Activated naive CD4-positive, alpha-beta T cell treated with anti-CD3 and anti-CD28 coated beads for 36 hours (primary cell): ENCODE measurements at regions of chr1 and their contacts with region 1.

Region 1: DNA sequence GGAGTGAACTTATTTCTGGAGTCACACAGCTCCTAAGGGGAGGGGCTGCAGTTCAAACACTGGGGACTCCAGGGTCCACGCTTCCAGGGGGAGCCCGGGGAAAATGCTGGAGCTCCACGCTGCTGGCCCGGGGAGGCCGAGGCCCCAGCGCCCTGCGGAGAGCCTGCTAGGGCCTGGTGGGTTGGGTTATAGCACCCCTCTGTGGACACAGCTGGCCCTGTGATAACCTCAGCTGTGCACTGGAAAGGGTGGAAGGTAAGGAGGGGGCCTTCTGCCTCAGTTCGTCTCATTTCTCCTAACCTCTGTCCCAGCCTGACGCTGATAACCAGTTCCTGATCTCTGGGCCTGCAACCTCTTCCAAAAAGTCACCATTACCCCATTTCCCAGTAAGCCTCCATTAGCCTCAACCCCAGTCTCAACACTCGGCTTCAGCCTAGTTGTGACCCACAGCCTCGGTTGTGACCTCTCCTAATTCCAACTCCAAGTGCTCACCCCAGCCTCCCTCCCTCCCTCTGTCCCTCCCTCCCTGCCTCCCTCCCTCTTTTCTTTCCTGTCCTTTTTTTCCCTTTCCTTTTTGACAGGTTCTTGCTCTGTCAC is 7.1 kb downstream of the NBL1 start:
- DNase-seq: peak; percentile 74
- H3K4me3 Mint-ChIP-seq: no peak overlapping the region
- H3K27ac Mint-ChIP-seq: no peak overlapping the region
- H3K4me1 Mint-ChIP-seq: peaks cover 33% of the 10 kb centered on the region
- H3K27me3 Mint-ChIP-seq: no peaks in the 10 kb centered on the region

Region 2: DNA sequence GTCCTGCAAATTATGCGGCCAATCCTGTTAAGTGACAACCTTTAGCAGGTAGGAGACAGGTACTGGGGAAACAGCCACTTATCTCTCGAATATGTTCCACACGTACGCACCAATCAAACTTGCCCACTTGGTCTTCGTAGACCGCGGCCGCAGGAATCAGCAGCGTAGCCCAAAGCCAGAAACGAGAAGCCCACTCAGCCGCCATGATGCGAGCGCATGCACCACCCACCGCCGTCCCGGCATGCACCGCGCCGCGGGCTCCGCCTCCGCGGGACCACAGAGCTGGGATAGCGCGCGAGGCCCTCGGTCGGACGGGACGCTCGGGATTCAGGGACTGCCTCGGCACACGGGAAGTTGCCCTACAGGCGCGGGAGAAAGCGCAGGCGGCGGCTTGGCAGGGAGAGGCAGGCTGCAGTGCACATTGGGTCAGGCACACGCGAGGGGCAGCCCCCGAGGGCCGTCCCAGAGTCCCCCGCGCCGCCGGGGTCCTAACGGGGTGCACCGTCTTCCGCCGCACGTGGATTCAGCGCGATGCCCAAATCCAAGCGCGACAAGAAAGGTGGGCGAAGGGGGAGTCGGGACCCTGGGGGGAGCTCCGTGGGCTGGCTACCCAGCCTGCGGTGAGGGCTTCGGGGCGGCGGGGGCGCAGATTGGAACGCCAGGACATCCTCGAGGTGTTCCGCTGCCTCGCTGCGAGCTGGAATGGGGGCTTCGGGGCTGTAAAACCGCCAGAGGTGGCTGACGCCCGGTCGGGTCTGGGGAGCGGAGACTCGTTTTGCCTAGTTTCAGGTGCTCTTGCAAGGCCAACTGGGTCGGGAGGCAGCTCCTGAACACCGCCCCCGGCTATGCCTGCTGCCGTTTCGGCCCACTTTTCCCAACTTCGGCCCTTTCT is 399.7 kb before region 1 on chr1 and contains the starts of genes EMC1 and MRTO4:
- CTCF ChIA-PET with region 1: no interaction called
- intact Hi-C with region 1: loop called (anchors 2 kb)
- DNase-seq: peak; percentile 90
- H3K4me3 Mint-ChIP-seq: peak within 1 kb of the TSS; percentile 85
- H3K27ac Mint-ChIP-seq: peak within 1 kb of the TSS; percentile 90
- H3K4me1 Mint-ChIP-seq: peaks cover 47% of the 10 kb centered on the region
- H3K27me3 Mint-ChIP-seq: no peaks in the 10 kb centered on the region
- total RNA-seq, gene EMC1: 40.2 to 43.2 TPM
- total RNA-seq, gene MRTO4: 53.2 to 54.3 TPM

Region 3: GRCh38 chr1:19390901-19391595 is 260.2 kb before region 1 on chr1:
- CTCF ChIA-PET with region 1: interaction called, 5 read pairs
- intact Hi-C with region 1: loop called (anchors 1 kb)
- DNase-seq: peak; percentile 69
- H3K4me3 Mint-ChIP-seq: peak overlapping the region; percentile 62
- H3K27ac Mint-ChIP-seq: peak overlapping the region; percentile 81
- H3K4me1 Mint-ChIP-seq: peaks cover 68% of the 10 kb centered on the region
- H3K27me3 Mint-ChIP-seq: no peaks in the 10 kb centered on the region

Region 4: GRCh38 chr1:19485362-19486187 is 165.7 kb before region 1 on chr1 and contains the start of gene CAPZB:
- CTCF ChIA-PET with region 1: interaction called, 9 read pairs
- intact Hi-C with region 1: loop called (anchors 2 kb)
- DNase-seq: peak; percentile 95
- H3K4me3 Mint-ChIP-seq: peak within 1 kb of the TSS; percentile 96
- H3K27ac Mint-ChIP-seq: peak within 1 kb of the TSS; percentile 97
- H3K4me1 Mint-ChIP-seq: peaks cover 57% of the 10 kb centered on the region
- H3K27me3 Mint-ChIP-seq: no peaks in the 10 kb centered on the region
- total RNA-seq, gene CAPZB: 362 to 381 TPM

Region 5: DNA sequence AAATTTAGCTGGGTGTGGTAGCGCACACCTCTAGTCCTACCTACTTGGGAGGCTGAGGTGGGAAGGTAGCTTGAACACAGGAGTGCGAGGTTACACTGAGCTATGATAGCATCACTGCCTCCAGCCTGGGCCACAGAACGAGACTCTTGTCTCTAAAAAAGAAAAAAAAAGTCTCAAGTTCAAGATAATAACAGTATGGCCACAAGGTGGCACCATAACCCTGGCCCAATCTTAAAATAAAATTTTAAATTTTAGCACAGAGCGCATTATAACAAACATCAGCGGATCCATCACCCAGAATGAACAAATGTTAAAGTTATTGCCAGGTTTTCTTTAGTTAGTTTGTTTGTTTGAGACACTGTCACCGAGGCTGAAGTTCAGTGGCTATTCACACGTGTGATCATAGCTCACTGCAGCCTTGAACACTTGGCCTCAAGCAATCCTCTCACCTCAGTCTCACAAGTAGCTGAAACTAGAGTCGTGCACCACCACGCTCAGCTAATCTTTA is 10.5 kb after region 1 on chr1:
- CTCF ChIA-PET with region 1: interaction called, 41 read pairs
- intact Hi-C with region 1: no loop called
- DNase-seq: peak; percentile 69
- H3K4me3 Mint-ChIP-seq: no peak overlapping the region
- H3K27ac Mint-ChIP-seq: no peak overlapping the region
- H3K4me1 Mint-ChIP-seq: peaks cover 21% of the 10 kb centered on the region
- H3K27me3 Mint-ChIP-seq: peaks cover 20% of the 10 kb centered on the region